HAP-1 (cell line): ENCODE measurements at regions of chr1 and their contacts with region 1.

Region 1: GRCh38 chr1:180208264-180208663 is 21.8 kb upstream of the LHX4 start:
- DNase-seq: no peak
- H3K4me3 ChIP-seq: no peak overlapping the region
- H3K4me1 ChIP-seq: peaks cover 2% of the 10 kb centered on the region
- H3K27me3 ChIP-seq: no peaks in the 10 kb centered on the region

Region 2: GRCh38 chr1:180269761-180270527 is 61.7 kb after region 1 on chr1:
- in situ Hi-C with region 1: loop called (anchors 10 kb)
- DNase-seq: no peak
- H3K4me3 ChIP-seq: no peak overlapping the region
- H3K4me1 ChIP-seq: no peaks in the 10 kb centered on the region
- H3K27me3 ChIP-seq: no peaks in the 10 kb centered on the region